ENCODE measurements at regions of chr5 and their contacts with region 1.

Region 1: DNA sequence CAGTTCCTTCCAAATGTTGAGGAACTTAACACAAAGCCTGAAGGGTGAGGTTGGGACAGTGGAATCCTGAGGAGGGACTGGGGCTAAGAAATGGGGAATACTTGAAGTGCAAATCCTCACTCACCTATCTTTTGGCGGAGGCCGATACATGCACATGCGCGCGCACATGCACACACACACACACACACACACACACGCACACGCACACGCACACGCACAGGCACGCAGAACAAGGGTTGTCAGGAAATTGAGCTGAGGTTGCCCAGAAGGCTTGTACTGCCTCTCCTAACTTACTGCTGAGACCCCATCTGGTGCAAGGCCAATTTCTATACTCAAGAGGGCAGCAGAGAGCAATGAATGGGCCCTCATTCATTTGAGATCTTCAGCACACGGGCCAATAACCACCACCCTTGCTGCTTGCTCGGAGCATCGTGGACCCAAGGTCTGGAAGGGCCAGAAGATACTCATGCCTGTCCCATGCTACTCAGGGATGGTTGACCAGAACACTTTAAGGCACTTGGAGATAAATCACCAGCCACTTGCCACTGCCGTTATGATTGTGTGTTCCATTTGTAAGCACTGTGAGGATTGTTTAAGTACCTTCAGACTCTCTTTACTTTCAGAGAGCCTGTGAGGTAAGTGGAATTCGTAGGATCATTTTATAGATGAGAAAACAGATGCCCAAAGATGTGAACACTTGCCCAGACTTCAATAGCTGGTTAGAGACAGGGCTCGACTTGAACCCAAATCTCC is 21.5 kb downstream of the BTF3 start:
- DNase-seq: peak in 7 of 10 donors; percentile 38 to 72 (median 58)
- H3K4me3 ChIP-seq: peak overlapping the region in 1 of 59 donors; percentile 14
- H3K27ac ChIP-seq: no peak overlapping the region
- H3K27me3 ChIP-seq: no peaks in the 10 kb centered on the region
- CTCF ChIP-seq: peak; percentile 42 to 83 (median 68)

Region 2: GRCh38 chr5:73137563-73138530 is 381.9 kb before region 1 on chr5:
- intact Hi-C with region 1: no loop called
- DNase-seq: no peak
- H3K4me3 ChIP-seq: no peak overlapping the region
- H3K27ac ChIP-seq: no peak overlapping the region
- H3K27me3 ChIP-seq: peaks cover 0 to 17% (median 0%) of the 10 kb centered on the region in 45 donors
- CTCF ChIP-seq: no peak

Region 3: DNA sequence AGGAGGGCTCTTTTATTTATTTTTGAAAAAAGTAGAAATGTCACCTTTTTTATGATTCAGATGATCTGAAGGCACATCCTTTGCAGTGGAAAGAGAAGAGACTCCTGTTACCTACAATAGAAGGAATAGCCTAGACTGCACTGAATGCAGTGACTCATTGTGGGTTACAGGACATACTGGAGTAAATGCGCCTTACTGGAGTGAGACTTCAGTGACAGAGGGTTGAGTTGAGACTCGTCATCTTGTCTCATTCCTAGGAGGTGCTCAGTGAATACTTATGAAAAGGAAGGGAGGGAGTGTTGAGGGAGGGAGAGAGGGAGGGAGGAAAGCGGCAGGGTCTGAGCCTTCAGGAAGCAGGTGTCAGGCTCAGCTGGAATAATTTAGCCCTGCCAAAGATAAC is 20.5 kb after region 1 on chr5:
- intact Hi-C with region 1: loop called in 1 of 2 experiments (anchors 1 kb)
- DNase-seq: no peak
- H3K4me3 ChIP-seq: no peak overlapping the region
- H3K27ac ChIP-seq: no peak overlapping the region
- H3K27me3 ChIP-seq: no peaks in the 10 kb centered on the region
- CTCF ChIP-seq: no peak

Region 4: GRCh38 chr5:73582285-73583145 is 62.8 kb after region 1 on chr5:
- intact Hi-C with region 1: loop called in 1 of 2 experiments (anchors 2 kb)
- DNase-seq: no peak
- H3K4me3 ChIP-seq: no peak overlapping the region
- H3K27ac ChIP-seq: no peak overlapping the region
- H3K27me3 ChIP-seq: no peaks in the 10 kb centered on the region
- CTCF ChIP-seq: no peak

Region 5: DNA sequence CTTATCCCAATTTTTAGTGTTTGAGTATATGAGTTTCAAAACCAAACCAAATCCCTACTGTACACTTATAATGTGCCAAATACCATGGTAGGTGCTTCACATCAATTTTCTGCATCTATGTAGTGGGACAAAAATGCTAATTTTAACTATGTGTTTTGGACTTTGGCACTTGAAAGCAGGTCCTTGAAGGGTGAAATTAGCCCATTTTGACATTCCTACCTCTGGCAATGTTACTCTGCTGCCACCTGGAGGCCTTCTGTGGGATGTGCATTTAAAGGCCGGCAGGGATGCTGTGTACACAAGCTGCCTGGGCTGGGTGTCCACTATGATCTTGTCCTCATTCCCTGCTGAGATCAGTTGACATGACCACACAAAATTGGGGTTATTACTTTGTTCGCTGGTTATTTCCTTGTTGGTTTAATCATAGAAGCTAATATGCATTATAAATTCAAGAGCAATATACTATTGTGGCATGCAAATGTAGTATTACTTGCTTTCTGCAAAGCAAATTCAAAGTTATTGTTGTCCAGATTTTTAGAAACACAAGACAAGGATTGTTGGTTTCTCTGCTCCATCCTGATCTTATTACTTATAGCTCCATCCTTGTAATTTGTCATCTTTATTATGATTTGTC is 273.1 kb after region 1 on chr5:
- intact Hi-C with region 1: loop called in 1 of 2 experiments (anchors 10 kb)
- DNase-seq: peak; percentile 59 to 87 (median 75)
- H3K4me3 ChIP-seq: no peak overlapping the region
- H3K27ac ChIP-seq: no peak overlapping the region
- H3K27me3 ChIP-seq: peaks cover 0 to 7% (median 0%) of the 10 kb centered on the region in 45 donors
- CTCF ChIP-seq: peak; percentile 88 to 99 (median 97)

Measured in dorsolateral prefrontal cortex (tissue), 120 donors.